Activated B cell treated with CpG ODN at 0.5 μM for 24 hours (primary cell): ENCODE measurements at regions of chr22 and their contacts with region 1.

Region 1: DNA sequence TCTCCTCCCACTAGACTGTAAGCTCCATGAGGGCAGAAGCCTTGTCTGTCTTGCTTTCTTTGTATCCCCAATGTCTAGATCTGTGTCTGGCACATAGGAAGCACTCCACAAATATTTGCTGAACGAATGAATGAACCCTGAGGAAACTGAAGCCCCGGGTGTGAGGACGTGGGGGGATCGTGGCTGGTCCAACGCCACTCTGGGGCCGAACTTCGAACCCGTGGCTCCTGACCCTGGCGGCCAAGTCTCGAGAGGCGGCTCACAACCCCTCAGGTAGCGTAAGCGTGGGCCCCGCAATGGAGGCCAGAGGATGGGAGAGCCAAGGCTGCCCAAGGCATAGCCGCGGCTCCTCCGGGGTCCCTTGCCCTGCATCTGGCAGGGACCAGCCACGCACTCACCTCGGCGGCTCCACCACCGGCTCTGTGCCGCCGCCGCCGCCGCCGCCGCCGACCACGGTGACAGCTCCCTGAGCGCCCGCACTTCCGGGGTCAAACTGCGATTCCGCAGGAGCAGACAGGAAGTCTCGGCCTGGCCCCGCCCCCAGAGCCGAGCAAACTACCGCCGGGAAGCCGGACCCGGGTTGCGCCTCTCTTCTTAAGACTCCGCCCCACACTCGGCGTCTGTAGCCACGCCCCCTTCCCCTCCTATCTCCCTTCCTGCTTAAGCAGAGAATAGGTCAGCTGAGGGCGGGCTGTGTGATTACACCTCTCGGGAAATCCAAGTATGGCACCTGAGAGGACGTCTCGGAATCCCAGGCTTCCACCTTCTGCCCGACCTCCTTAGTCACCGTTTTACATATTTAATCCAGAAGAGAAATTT is at the start of gene ASCC2:
- DNase-seq: peak; percentile 97
- ATAC-seq: peak; percentile 99
- H3K4me3 Mint-ChIP-seq: peak within 1 kb of the TSS; percentile 97
- H3K27ac Mint-ChIP-seq: peak within 1 kb of the TSS; percentile 96
- H3K4me1 Mint-ChIP-seq: peaks cover 37% of the 10 kb centered on the region
- H3K27me3 Mint-ChIP-seq: no peaks in the 10 kb centered on the region
- CTCF ChIP-seq: no peak
- total RNA-seq, gene ASCC2: 88.1 and 89.7 TPM in 2 replicates

Region 2: DNA sequence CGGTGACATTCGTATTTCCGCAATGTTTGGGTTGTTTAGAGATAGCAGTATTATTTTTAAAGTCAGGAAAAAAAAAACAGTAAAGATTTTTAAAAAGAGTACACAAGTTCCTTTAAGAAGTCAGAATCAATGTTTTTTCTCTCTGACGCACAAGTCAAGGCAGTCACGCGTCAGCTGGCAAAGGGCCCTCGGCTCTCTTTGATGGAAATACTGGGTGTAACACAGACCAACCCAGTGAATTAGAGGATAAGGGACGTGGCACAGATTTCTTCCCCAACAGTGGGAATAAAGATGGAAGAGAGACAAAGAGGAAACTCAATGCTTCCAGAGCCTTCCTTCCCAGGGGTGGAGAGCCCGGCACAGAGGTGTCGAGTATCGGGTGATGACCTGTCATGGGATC is 13.3 kb before region 1 on chr22:
- CTCF ChIA-PET with region 1: no interaction called
- POLR2A ChIA-PET with region 1: interaction called, 10 read pairs
- intact Hi-C with region 1: no loop called
- DNase-seq: no peak
- ATAC-seq: no peak
- H3K4me3 Mint-ChIP-seq: no peak overlapping the region
- H3K27ac Mint-ChIP-seq: no peak overlapping the region
- H3K4me1 Mint-ChIP-seq: peaks cover 6% of the 10 kb centered on the region
- H3K27me3 Mint-ChIP-seq: no peaks in the 10 kb centered on the region
- CTCF ChIP-seq: no peak

Region 3: GRCh38 chr22:29883045-29883774 is 45.2 kb after region 1 on chr22 and contains the start of gene MTMR3:
- CTCF ChIA-PET with region 1: interaction called, 3 read pairs
- POLR2A ChIA-PET with region 1: interaction called, 19 read pairs
- intact Hi-C with region 1: loop called (anchors 1 kb)
- DNase-seq: peak; percentile 98
- ATAC-seq: peak; percentile 82
- H3K4me3 Mint-ChIP-seq: peak within 1 kb of the TSS; percentile 92
- H3K27ac Mint-ChIP-seq: peak within 1 kb of the TSS; percentile 83
- H3K4me1 Mint-ChIP-seq: peaks cover 10% of the 10 kb centered on the region
- H3K27me3 Mint-ChIP-seq: peaks cover 3% of the 10 kb centered on the region
- CTCF ChIP-seq: no peak
- total RNA-seq, gene MTMR3: 34.8 and 36.6 TPM in 2 replicates

Region 4: DNA sequence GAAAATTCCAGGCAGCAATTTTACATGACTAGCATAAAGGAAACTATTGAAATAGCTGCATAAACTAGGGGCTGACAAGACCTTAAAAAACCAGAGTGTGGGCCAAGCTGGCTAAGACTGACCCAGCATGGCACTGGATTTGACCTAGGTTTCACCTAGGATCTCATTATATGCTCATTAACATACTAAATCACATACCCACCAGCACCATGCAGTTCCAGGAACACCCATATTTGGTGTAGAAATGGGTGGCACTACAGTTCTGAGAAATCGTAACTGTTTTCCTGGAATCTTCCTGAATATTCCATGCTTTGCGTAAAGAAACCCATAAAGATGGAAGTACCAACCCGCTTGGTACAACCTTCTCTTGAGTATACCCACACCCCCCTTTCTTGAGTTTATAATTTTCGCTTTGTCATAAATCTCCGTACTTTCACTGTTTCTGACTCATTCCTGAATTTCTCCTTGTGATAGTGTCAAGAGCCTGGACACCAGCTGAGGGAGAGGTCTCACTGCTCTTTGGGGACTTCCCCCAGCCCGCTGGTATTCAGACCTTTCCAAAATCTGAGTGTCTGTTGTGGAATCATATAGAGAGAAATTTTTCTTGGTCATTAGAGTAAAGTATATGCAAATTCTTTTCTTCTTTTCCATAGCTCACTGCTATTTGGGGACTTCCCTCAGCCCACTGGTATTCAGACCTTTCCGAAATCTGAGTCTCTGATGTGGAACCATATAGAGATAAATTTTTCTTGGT is 100.1 kb after region 1 on chr22:
- CTCF ChIA-PET with region 1: no interaction called
- POLR2A ChIA-PET with region 1: interaction called, 6 read pairs
- intact Hi-C with region 1: loop called (anchors 5 kb)
- DNase-seq: no peak
- ATAC-seq: peak; percentile 88
- H3K4me3 Mint-ChIP-seq: peak overlapping the region; percentile 80
- H3K27ac Mint-ChIP-seq: peak overlapping the region; percentile 87
- H3K4me1 Mint-ChIP-seq: peaks cover 45% of the 10 kb centered on the region
- H3K27me3 Mint-ChIP-seq: no peaks in the 10 kb centered on the region
- CTCF ChIP-seq: no peak